Heart left ventricle (tissue), 16 donors: ENCODE measurements at regions of chr14 and their contacts with region 1.

Region 1: GRCh38 chr14:74501135-74501614 is 7.6 kb downstream of the ISCA2 start:
- DNase-seq: peak; percentile 49 to 80 (median 68)
- ATAC-seq: peak; percentile 5 to 65 (median 38)
- H3K4me3 ChIP-seq: no peak overlapping the region
- H3K27ac ChIP-seq: no peak overlapping the region
- H3K4me1 ChIP-seq: peaks cover 0 to 8% (median 0%) of the 10 kb centered on the region in 12 donors
- H3K27me3 ChIP-seq: no peaks in the 10 kb centered on the region
- CTCF ChIP-seq: peak; percentile 25 to 68 (median 51)
- POLR2A ChIP-seq: no peak

Region 2: GRCh38 chr14:74804219-74804826 is 303.1 kb after region 1 on chr14:
- intact Hi-C with region 1: loop called in 1 of 10 experiments (anchors 10 kb)
- DNase-seq: no peak
- ATAC-seq: peak in 2 of 4 donors; percentile 56
- H3K4me3 ChIP-seq: no peak overlapping the region
- H3K27ac ChIP-seq: no peak overlapping the region
- H3K4me1 ChIP-seq: no peaks in the 10 kb centered on the region
- H3K27me3 ChIP-seq: no peaks in the 10 kb centered on the region
- CTCF ChIP-seq: peak; percentile 19 to 64 (median 40)
- POLR2A ChIP-seq: no peak